Left cardiac atrium (tissue), 4 donors: ENCODE measurements at regions of chr1 and their contacts with region 1.

Region 1: GRCh38 chr1:89483010-89483756 is 41.4 kb upstream of the LRRC8B start:
- DNase-seq: peak; percentile 82
- ATAC-seq: peak; percentile 71 to 72

Region 2: GRCh38 chr1:89243046-89243445 is 240.1 kb before region 1 on chr1:
- intact Hi-C with region 1: no loop called
- DNase-seq: no peak
- ATAC-seq: no peak

Region 3: GRCh38 chr1:89598450-89599331 is 115.5 kb after region 1 on chr1:
- intact Hi-C with region 1: loop called (anchors 2 to 5 kb)
- DNase-seq: no peak
- ATAC-seq: peak; percentile 38 to 61

Region 4: DNA sequence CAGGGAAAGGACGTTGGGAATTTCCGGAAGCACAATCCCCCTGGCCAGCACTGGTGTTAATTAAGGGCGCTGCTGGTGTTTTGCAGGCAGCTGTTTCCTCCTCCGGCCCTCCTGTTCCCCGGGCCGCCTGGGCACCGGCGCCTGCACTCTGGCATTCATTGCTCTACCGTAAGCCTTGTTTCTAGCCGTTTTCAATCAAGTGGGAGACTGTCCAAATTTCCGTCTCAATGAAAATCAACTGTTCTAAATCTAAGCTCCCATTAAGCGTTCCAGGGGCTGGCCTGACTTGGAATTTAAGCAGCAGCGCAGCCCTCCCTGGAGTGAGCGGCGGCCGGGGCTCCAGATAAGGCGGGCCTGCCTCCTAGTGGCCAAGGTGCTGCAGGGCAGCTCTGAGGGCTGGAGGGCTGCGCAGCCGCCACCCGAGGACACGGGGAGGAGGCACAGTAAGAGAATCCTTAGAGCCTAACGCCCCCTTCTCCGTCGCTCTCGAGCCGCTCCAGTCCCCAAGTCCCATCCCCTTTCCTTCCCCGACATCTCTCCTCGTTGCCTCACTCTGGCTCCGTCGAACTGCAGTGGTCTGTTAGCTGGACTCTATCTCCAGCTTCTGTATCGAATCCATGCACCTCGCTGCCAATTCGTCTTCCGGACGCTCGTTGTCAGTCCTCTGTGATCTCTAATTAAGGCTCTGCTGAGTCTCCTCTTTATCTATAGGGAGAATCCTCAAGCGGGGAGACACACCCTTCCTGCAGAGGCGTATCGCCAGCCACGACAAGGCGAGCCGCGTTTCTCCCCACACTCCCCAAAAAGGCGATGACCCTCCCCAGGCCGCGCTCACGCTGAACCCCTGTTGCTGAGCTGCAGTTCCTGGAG is 279.8 kb after region 1 on chr1:
- intact Hi-C with region 1: loop called (anchors 5 kb)
- DNase-seq: peak; percentile 90
- ATAC-seq: peak; percentile 98 to 99